ENCODE measurements at regions of chr7 and their contacts with region 1.

Region 1: GRCh38 chr7:151884312-151885201 is 7.6 kb upstream of the PRKAG2 start:
- DNase-seq: no peak
- H3K4me3 ChIP-seq: no peak overlapping the region
- H3K27ac ChIP-seq: no peak overlapping the region
- H3K4me1 ChIP-seq: no peaks in the 10 kb centered on the region
- H3K27me3 ChIP-seq: peaks cover 16% of the 10 kb centered on the region
- CTCF ChIP-seq: no peak

Region 2: DNA sequence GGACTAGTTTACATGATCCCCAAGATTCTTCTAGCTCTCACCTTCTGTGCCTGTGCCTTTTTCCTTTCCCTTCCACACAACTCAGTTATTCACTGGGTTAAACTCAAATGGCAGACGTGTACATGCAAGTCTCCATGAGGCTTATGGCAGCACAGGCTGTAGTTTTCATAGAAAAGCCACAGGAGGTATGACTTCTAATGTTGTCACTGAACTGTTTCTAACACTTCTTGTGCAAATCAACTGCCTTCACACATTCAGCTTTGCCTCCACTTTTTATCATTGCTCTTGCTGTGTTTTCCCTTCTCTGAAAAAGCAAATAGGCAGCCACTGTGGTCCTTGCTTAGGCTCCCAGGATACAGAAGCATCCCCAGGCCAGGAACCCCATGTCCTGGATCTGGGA is 1152.6 kb before region 1 on chr7:
- CTCF ChIA-PET with region 1: no interaction called
- dilution Hi-C with region 1: no loop called
- in situ Hi-C with region 1: no loop called
- intact Hi-C with region 1: no loop called
- DNase-seq: no peak
- H3K4me3 ChIP-seq: no peak overlapping the region
- H3K27ac ChIP-seq: no peak overlapping the region
- H3K4me1 ChIP-seq: no peaks in the 10 kb centered on the region
- H3K27me3 ChIP-seq: no peaks in the 10 kb centered on the region
- CTCF ChIP-seq: no peak

Region 3: GRCh38 chr7:151925446-151926335 is 41.1 kb after region 1 on chr7:
- CTCF ChIA-PET with region 1: no interaction called
- dilution Hi-C with region 1: loop called (anchors 5 kb)
- in situ Hi-C with region 1: no loop called
- intact Hi-C with region 1: no loop called
- DNase-seq: no peak
- H3K4me3 ChIP-seq: no peak overlapping the region
- H3K27ac ChIP-seq: no peak overlapping the region
- H3K4me1 ChIP-seq: no peaks in the 10 kb centered on the region
- H3K27me3 ChIP-seq: no peaks in the 10 kb centered on the region
- CTCF ChIP-seq: no peak

Measured in mammary epithelial cell (primary cell).